Heart left ventricle (tissue), 16 donors: ENCODE measurements at regions of chr6 and their contacts with region 1.

Region 1: GRCh38 chr6:2900821-2901644 is 2.1 kb downstream of the SERPINB9 start:
- DNase-seq: peak in 2 of 5 donors; percentile 43 to 51
- ATAC-seq: no peak
- H3K4me3 ChIP-seq: peak overlapping the region in 8 of 12 donors; percentile 18 to 94 (median 78)
- H3K27ac ChIP-seq: peak overlapping the region in 3 of 12 donors; percentile 11 to 54 (median 22)
- H3K4me1 ChIP-seq: peaks cover 0 to 61% (median 19%) of the 10 kb centered on the region in 12 donors
- H3K27me3 ChIP-seq: no peaks in the 10 kb centered on the region
- CTCF ChIP-seq: no peak
- POLR2A ChIP-seq: no peak

Region 2: DNA sequence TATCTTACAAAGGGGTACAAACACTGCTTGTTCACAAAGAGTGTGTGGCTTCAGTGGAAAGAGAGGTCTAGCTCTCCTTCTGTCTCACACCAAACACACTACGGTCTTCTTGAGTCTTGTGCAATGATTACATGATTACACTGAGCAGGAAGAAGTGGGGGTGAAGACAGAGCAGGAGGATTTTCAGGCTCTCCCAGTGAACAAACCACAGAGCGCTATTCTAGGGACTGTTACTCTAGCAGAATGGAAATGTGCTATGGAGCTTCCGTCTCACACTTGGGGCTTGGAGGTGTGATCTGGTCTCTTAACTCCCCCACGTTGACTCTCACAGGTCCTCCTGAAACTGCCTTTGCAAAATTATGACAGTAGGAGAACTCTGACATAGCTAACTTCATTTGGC is 353.7 kb before region 1 on chr6:
- intact Hi-C with region 1: no loop called
- DNase-seq: no peak
- ATAC-seq: no peak
- H3K4me3 ChIP-seq: no peak overlapping the region
- H3K27ac ChIP-seq: no peak overlapping the region
- H3K4me1 ChIP-seq: peaks cover 0 to 14% (median 0%) of the 10 kb centered on the region in 12 donors
- H3K27me3 ChIP-seq: peaks cover 0 to 18% (median 0%) of the 10 kb centered on the region in 9 donors
- CTCF ChIP-seq: no peak
- POLR2A ChIP-seq: no peak

Region 3: GRCh38 chr6:2853761-2854395 is 47.2 kb before region 1 on chr6:
- intact Hi-C with region 1: loop called in 3 of 10 experiments (anchors 2 to 10 kb)
- DNase-seq: peak in 2 of 5 donors; percentile 37 to 52
- ATAC-seq: peak; percentile 18 to 49 (median 20)
- H3K4me3 ChIP-seq: peak overlapping the region in 10 of 12 donors; percentile 16 to 56 (median 38)
- H3K27ac ChIP-seq: peak overlapping the region; percentile 11 to 97 (median 75)
- H3K4me1 ChIP-seq: peaks cover 4 to 69% (median 44%) of the 10 kb centered on the region in 12 donors
- H3K27me3 ChIP-seq: no peaks in the 10 kb centered on the region
- CTCF ChIP-seq: peak in 11 of 12 donors; percentile 21 to 65 (median 42)
- POLR2A ChIP-seq: no peak

Region 4: DNA sequence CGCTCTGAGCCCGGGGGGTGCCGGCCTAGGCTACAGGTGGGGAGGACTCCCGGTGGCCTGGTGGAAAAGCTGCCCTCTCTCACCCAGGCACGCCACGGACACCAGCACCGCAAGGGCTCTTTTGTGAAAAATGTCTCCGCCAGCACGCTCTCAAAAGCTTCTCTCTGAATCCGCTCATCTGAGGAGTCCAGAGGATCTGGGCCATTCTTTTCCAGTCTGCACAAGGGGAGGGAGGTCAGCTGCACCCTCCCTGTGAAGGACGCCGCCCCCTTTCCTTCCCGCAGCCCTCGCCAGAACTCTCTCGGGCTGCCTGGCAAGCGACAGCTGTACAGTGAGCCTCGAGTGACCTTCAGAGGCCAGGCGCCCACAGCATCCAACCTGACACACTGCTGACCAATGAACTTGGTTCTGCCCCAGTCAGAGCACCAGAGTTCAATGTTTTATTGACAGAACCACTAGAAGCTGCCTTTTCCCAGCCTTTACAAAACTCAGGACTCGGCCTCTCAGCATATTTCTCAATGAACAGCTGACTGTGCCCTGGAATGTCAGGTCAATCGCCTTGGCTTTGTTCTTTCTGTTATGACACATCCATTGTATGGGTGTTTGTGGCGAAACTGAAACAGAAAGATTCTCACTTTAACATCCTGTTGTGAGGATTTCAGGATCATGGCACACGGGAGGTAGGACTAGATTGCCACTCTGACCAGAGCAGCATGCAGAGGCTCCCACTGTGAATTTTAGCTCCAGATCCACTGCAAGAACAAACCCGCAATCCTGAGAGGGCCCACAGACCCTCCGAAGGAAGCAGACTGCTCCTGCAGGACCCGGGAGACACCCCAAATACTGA is 24.6 kb before region 1 on chr6:
- intact Hi-C with region 1: loop called in 1 of 10 experiments (anchors 2 kb)
- DNase-seq: peak; percentile 76 to 86 (median 82)
- ATAC-seq: peak; percentile 88 to 94 (median 92)
- H3K4me3 ChIP-seq: peak overlapping the region; percentile 49 to 86 (median 68)
- H3K27ac ChIP-seq: peak overlapping the region; percentile 76 to 96 (median 87)
- H3K4me1 ChIP-seq: peaks cover 0 to 57% (median 26%) of the 10 kb centered on the region in 12 donors
- H3K27me3 ChIP-seq: no peaks in the 10 kb centered on the region
- CTCF ChIP-seq: no peak
- POLR2A ChIP-seq: no peak